WTC11 (cell line): ENCODE measurements at regions of chr2 and their contacts with region 1.

Region 1: GRCh38 chr2:85230679-85231467 is 96.9 kb downstream of the TGOLN2 start:
- DNase-seq: peak; percentile 44
- ATAC-seq: peak; percentile 50
- H3K4me3 Mint-ChIP-seq: peak overlapping the region; percentile 18; the same call in 1 of the 2 replicates
- H3K27ac Mint-ChIP-seq: peak overlapping the region; percentile 84
- H3K4me1 Mint-ChIP-seq: peaks cover 80% of the 10 kb centered on the region
- H3K27me3 Mint-ChIP-seq: no peaks in the 10 kb centered on the region
- CTCF ChIP-seq: no peak

Region 2: GRCh38 chr2:85243101-85244072 is 12.5 kb after region 1 on chr2:
- CTCF ChIA-PET with region 1: interaction called, 17 read pairs
- POLR2A ChIA-PET with region 1: no interaction called
- DNase-seq: peak; percentile 77
- ATAC-seq: peak; percentile 56
- H3K4me3 Mint-ChIP-seq: no peak overlapping the region
- H3K27ac Mint-ChIP-seq: peak overlapping the region; percentile 67
- H3K4me1 Mint-ChIP-seq: peaks cover 87% of the 10 kb centered on the region
- H3K27me3 Mint-ChIP-seq: no peaks in the 10 kb centered on the region
- CTCF ChIP-seq: peak; percentile 53; the same call in 1 of the 2 replicates

Region 3: GRCh38 chr2:85266146-85267041 is 35.5 kb after region 1 on chr2:
- CTCF ChIA-PET with region 1: interaction called, 10 read pairs
- POLR2A ChIA-PET with region 1: no interaction called
- DNase-seq: peak; percentile 85
- ATAC-seq: peak; percentile 63
- H3K4me3 Mint-ChIP-seq: no peak overlapping the region
- H3K27ac Mint-ChIP-seq: peak overlapping the region; percentile 67
- H3K4me1 Mint-ChIP-seq: peaks cover 72% of the 10 kb centered on the region
- H3K27me3 Mint-ChIP-seq: no peaks in the 10 kb centered on the region
- CTCF ChIP-seq: peak; percentile 95